K562 (cell line): ENCODE measurements at regions of chr5 and their contacts with region 1.

Region 1: DNA sequence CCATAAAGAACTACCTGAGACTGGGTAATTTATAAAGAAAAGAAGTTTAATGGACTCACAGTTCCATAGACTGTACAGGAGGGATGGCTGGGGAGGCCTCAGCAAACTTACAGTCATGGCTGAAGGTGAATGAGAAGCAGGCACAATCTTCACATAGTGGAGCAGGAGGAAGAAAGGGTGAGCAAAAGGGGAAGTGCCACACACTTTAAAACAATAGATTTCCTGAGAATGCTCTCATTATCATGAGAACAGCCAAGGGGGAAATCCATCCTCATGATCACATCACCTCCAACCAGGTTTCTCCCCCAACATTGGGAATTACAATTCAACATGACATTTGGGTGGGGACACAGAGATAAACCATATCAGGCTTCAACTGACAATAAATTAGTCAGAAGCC is 664.9 kb downstream of the TAF11L14 start:
- DNase-seq: no peak
- ATAC-seq: no peak
- H3K4me3 ChIP-seq: no peak overlapping the region
- H3K27ac ChIP-seq: no peak overlapping the region
- H3K4me1 ChIP-seq: no peaks in the 10 kb centered on the region
- H3K27me3 ChIP-seq: no peaks in the 10 kb centered on the region
- CTCF ChIP-seq: no peak
- EP300 ChIP-seq: no peak
- POLR2A ChIP-seq: no peak
- RAD21 ChIP-seq: no peak

Region 2: GRCh38 chr5:17966636-17967402 is 332.3 kb before region 1 on chr5:
- CTCF ChIA-PET with region 1: no interaction called
- POLR2A ChIA-PET with region 1: no interaction called
- in situ Hi-C with region 1: no loop called
- intact Hi-C with region 1: no loop called
- DNase-seq: no peak
- ATAC-seq: no peak
- H3K4me3 ChIP-seq: no peak overlapping the region
- H3K27ac ChIP-seq: no peak overlapping the region
- H3K4me1 ChIP-seq: no peaks in the 10 kb centered on the region
- H3K27me3 ChIP-seq: no peaks in the 10 kb centered on the region
- CTCF ChIP-seq: no peak
- EP300 ChIP-seq: no peak
- POLR2A ChIP-seq: no peak
- RAD21 ChIP-seq: no peak

Region 3: DNA sequence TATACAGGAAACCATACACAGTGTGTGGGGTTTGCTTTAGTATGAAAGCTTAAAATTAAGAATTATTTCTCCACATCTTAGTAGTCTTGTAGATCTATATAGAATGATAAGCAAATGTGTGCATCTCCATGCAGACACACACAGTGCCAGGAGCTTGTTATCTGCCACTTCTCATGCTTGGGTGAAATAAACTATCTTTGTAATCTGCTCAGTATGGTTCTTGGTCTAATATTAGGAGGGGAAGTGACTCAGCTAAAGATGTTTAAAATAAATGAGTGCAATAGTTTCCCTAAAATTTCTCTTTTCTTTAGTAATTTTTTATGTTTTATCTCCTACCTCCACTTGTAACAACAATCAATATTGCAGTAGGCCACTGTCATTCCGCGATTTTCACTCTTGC is 24.7 kb after region 1 on chr5:
- CTCF ChIA-PET with region 1: no interaction called
- POLR2A ChIA-PET with region 1: no interaction called
- in situ Hi-C with region 1: no loop called
- intact Hi-C with region 1: loop called (anchors 1 kb)
- DNase-seq: no peak
- ATAC-seq: no peak
- H3K4me3 ChIP-seq: no peak overlapping the region
- H3K27ac ChIP-seq: no peak overlapping the region
- H3K4me1 ChIP-seq: no peaks in the 10 kb centered on the region
- H3K27me3 ChIP-seq: no peaks in the 10 kb centered on the region; a peak in 1 of 5 replicates
- CTCF ChIP-seq: no peak
- EP300 ChIP-seq: no peak
- POLR2A ChIP-seq: no peak
- RAD21 ChIP-seq: no peak